IMR-90 (cell line): ENCODE measurements at regions of chr10 and their contacts with region 1.

Region 1: DNA sequence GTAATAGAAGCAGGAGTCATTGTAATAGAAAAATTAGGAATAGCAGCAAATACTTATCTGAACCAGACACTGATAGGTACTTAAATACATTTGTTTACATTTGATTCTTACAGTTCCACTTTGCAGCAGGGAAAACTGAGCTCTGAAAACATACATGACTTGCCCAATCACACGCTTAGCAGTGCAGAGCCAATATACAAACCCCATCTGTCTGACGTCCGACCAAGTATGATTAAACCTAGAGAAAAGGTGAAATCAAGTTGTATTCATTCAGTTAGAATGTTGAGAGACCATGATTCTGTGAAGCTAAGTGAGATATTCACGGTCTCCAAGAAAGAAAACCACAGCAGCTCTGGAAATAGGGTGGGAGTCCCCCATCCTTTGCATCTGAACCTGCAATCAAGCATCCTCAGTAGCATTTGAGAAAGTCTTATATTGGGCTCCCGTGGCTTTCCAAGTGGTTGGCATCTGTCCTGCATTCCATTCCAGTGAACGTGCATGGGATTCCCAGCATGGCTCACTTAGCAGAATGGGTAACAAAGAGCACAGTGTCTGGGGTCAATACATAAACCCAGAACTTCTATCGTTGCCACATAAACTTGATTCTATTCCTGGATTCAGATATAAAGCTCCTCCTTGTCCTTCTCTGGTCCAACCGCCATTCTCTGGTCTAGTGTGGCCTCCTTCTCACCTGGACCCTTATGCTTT is 148.7 kb upstream of the RSU1 start:
- DNase-seq: peak; percentile 99
- ATAC-seq: peak; percentile 52
- H3K4me3 ChIP-seq: no peak overlapping the region
- H3K27ac ChIP-seq: peak overlapping the region; percentile 89
- H3K4me1 ChIP-seq: peaks cover 18% of the 10 kb centered on the region
- H3K27me3 ChIP-seq: no peaks in the 10 kb centered on the region
- CTCF ChIP-seq: no peak
- POLR2A ChIP-seq: no peak
- RAD21 ChIP-seq: no peak

Region 2: GRCh38 chr10:16891375-16892313 is 74.2 kb before region 1 on chr10:
- CTCF ChIA-PET with region 1: no interaction called
- POLR2A ChIA-PET with region 1: no interaction called
- dilution Hi-C with region 1: no loop called
- in situ Hi-C with region 1: no loop called
- intact Hi-C with region 1: loop called (anchors 2 kb)
- DNase-seq: peak; percentile 82
- ATAC-seq: peak; percentile 67
- H3K4me3 ChIP-seq: no peak overlapping the region
- H3K27ac ChIP-seq: no peak overlapping the region
- H3K4me1 ChIP-seq: no peaks in the 10 kb centered on the region; the same call in none of the 2 replicates
- H3K27me3 ChIP-seq: no peaks in the 10 kb centered on the region
- CTCF ChIP-seq: peak; percentile 55
- POLR2A ChIP-seq: peak; percentile 73
- RAD21 ChIP-seq: peak; percentile 68

Region 3: DNA sequence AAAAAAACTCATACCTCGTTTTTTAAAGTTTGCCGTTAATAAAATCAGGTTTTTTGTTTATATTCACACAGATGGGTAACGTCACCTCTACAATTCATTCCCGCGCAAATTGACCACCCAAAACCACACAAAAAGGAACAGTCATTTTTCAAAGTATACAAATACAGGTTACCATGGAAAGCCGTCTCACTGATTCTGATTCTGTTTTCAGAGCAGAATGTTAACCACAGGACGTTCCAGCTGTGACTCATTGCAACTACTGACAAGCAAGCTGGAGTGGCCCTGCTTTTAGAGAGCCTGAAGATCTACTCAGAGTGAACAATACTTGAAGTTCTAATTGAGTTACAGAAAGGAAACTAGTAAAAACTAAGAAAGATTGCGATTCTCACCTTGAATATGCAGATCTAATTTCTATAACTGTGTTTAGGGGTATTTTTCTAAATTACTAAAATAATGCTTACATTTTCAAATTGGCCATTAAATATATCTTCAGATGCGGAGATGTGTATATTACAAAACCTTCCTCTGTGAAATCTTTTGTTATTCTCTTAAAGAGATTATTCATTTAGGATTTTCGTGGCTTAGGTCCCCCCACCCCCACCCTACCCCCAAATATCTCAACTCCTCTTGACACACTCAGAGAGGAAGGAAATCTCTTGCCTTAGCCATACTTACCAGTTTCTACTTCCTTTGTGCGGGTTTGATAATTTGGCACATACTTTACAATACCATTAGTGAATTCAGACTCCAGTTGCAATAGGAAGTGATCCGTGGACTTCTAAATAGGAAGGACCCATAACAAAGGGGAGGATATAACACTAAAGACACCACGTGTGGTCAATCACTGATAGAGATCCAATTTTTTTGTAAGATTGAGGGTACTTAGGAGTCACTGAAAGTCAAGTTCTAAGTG is 57.7 kb after region 1 on chr10:
- CTCF ChIA-PET with region 1: no interaction called
- POLR2A ChIA-PET with region 1: interaction called, 3 read pairs
- dilution Hi-C with region 1: no loop called
- in situ Hi-C with region 1: no loop called
- intact Hi-C with region 1: loop called (anchors 1 kb)
- DNase-seq: peak; percentile 99
- ATAC-seq: peak; percentile 81
- H3K4me3 ChIP-seq: no peak overlapping the region
- H3K27ac ChIP-seq: peak overlapping the region; percentile 71
- H3K4me1 ChIP-seq: peaks cover 12% of the 10 kb centered on the region
- H3K27me3 ChIP-seq: no peaks in the 10 kb centered on the region
- CTCF ChIP-seq: no peak
- POLR2A ChIP-seq: peak; percentile 74
- RAD21 ChIP-seq: peak; percentile 46; the same call in 1 of the 2 replicates

Region 4: GRCh38 chr10:17075533-17076359 is 109.9 kb after region 1 on chr10:
- CTCF ChIA-PET with region 1: no interaction called
- POLR2A ChIA-PET with region 1: no interaction called
- dilution Hi-C with region 1: no loop called
- in situ Hi-C with region 1: no loop called
- intact Hi-C with region 1: loop called (anchors 5 kb)
- DNase-seq: peak; percentile 96
- ATAC-seq: peak; percentile 88
- H3K4me3 ChIP-seq: no peak overlapping the region
- H3K27ac ChIP-seq: peak overlapping the region; percentile 78
- H3K4me1 ChIP-seq: peaks cover 15% of the 10 kb centered on the region
- H3K27me3 ChIP-seq: no peaks in the 10 kb centered on the region
- CTCF ChIP-seq: no peak
- POLR2A ChIP-seq: no peak
- RAD21 ChIP-seq: 0 out of 2 replicates have a peak, but pooled peaks have one; percentile 10

Region 5: DNA sequence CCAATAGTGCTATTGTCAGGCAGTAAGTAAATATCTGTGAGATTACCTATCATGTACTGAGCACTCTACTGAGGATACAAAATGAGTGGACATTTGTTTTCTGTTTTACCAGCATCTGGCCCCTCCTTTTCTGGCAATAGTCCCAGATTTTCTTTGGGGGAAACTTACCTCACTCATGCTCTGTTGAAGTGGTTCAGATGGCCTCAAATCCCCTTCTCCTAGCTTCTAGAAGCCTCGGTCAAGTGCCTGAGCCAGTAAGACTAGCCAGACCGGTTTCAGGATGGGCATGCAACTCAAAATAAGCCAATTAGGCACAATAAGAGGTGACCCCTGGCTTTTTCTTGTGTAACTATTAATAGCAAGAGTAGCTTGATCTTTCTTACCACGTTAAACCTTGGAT is 215.9 kb after region 1 on chr10:
- CTCF ChIA-PET with region 1: no interaction called
- POLR2A ChIA-PET with region 1: no interaction called
- dilution Hi-C with region 1: no loop called
- in situ Hi-C with region 1: no loop called
- intact Hi-C with region 1: no loop called
- DNase-seq: no peak
- ATAC-seq: no peak
- H3K4me3 ChIP-seq: no peak overlapping the region
- H3K27ac ChIP-seq: no peak overlapping the region
- H3K4me1 ChIP-seq: peaks cover 3% of the 10 kb centered on the region
- H3K27me3 ChIP-seq: no peaks in the 10 kb centered on the region
- CTCF ChIP-seq: no peak
- POLR2A ChIP-seq: no peak
- RAD21 ChIP-seq: no peak

Region 6: GRCh38 chr10:17316488-17317170 is 350.7 kb after region 1 on chr10:
- CTCF ChIA-PET with region 1: no interaction called
- POLR2A ChIA-PET with region 1: no interaction called
- dilution Hi-C with region 1: no loop called
- in situ Hi-C with region 1: no loop called
- intact Hi-C with region 1: no loop called
- DNase-seq: no peak
- ATAC-seq: no peak
- H3K4me3 ChIP-seq: no peak overlapping the region
- H3K27ac ChIP-seq: no peak overlapping the region
- H3K4me1 ChIP-seq: no peaks in the 10 kb centered on the region
- H3K27me3 ChIP-seq: peaks cover 12% of the 10 kb centered on the region
- CTCF ChIP-seq: no peak
- POLR2A ChIP-seq: no peak
- RAD21 ChIP-seq: no peak